Left colon (tissue), 2 donors: ENCODE measurements at regions of chr1 and their contacts with region 1.

Region 1: GRCh38 chr1:75724472-75725022 is at the start of gene ACADM:
- DNase-seq: peak; percentile 88 to 90
- ATAC-seq: peak; percentile 95
- total RNA-seq, gene ACADM: 92.6 to 92.7 TPM

Region 2: DNA sequence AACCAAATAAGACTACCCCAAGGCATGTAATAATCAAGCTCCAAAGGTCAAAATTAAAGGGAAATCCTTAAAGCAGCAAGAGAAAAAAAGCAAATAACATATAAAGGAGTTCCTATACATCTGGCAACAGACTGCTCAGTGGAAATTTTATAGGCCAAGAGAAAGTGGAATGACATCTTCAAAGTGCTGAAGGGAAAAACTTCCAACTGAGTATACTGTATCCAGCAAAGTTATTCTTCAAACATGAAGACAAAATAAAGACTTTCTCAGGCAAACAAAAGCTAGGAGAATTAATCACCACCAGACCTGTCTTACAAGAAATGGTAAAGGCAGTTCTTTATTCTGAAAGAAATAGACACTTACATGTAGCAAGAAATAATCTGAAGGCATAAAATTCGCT is 68.6 kb before region 1 on chr1:
- intact Hi-C with region 1: no loop called
- DNase-seq: no peak
- ATAC-seq: no peak

Region 3: DNA sequence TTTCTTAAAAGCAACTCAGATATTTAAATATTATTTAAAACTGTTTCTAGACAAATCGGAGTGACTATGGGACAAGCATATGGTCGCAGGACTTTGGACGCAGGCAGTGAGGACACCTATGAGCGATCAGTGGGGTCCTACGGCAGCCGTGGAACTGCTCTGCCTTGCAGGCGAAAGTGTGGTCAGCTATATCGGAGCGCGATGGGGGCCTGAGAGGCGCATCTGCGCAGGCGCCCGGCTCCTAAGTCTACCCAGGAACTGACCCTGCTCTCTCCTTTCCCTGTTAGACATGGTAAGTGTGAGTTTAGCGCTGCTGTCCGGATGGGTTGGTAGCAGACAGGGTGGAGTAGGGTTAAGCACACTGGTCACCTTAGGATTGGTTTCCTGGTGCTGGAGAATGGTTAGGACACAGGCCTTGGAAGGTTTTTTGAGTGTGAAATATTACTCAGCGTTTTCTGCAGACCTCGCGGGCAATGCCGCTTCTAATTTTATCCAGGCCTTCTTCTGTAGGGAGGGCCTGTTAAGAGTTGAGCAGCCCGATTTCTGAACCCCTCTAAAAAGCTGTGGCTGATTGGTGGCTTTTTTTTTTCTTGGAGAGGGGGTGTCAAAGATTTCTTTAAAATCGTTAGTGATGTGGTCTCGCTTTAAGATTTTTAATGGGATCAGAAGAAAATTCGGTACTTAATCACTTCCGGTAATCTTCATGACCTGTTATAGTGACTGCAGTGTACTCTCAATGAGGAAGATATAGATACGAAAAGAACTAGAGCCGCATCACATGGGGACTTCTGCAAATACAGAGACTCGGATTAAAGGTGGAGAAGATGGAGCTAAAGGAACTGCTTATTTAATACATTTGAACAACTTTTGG is 61.7 kb after region 1 on chr1 and contains the start of gene RABGGTB:
- intact Hi-C with region 1: loop called in 1 of 2 experiments (anchors 5 kb)
- DNase-seq: peak; percentile 95 to 97
- ATAC-seq: peak; percentile 96
- total RNA-seq, gene RABGGTB: 49.7 to 68.5 TPM